Activated naive CD4-positive, alpha-beta T cell treated with anti-CD3 and anti-CD28 coated beads for 36 hours (primary cell): ENCODE measurements at regions of chr20 and their contacts with region 1.

Region 1: DNA sequence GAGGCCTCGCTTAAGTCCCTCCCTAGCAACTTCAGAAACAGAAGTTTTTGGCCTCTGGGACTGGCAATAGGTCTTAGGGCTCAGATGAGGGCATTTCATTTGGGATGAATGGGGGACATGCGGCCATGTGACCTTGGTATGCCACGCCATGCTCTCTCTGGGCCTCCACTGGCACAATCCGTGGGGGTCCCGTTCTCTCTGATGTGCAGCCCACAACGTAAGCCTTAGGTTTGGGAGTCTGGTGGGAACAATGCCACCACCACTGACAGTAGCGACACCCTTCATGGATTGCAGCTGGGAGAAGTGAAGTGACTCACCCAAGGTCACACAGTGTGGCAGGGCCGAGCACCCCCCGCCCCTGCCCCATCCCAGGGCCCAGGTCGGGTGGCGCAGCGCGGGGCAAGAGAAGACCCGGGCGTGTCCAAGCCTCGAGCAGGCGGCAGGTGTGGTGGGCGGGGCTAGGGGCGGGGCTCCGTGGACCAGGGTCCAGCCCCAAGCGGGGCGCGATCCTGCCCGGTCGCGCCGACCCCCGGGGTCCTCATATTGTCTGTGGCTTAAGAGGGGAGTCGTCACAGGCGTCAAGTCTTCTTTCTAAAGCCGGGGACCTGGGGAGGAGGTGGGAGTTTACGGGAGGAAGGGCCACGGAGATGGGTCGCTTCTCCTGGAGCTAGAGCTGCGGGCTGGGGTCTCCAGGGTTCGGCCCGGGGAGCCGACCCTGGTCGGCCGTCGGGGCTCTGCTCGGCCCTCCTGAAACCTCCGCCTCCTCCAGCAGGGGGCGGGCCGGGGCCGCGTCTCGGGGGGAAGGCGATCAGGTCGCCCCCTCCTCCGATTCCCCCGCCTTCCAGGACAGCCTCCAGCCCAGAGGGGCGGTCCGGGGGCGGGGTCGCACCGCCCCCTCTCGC is 698 bp upstream of the CEBPB start:
- DNase-seq: peak; percentile 90
- H3K4me3 Mint-ChIP-seq: peak overlapping the region; percentile 29
- H3K27ac Mint-ChIP-seq: no peak overlapping the region
- H3K4me1 Mint-ChIP-seq: peaks cover 15% of the 10 kb centered on the region
- H3K27me3 Mint-ChIP-seq: peaks cover 9% of the 10 kb centered on the region

Region 2: DNA sequence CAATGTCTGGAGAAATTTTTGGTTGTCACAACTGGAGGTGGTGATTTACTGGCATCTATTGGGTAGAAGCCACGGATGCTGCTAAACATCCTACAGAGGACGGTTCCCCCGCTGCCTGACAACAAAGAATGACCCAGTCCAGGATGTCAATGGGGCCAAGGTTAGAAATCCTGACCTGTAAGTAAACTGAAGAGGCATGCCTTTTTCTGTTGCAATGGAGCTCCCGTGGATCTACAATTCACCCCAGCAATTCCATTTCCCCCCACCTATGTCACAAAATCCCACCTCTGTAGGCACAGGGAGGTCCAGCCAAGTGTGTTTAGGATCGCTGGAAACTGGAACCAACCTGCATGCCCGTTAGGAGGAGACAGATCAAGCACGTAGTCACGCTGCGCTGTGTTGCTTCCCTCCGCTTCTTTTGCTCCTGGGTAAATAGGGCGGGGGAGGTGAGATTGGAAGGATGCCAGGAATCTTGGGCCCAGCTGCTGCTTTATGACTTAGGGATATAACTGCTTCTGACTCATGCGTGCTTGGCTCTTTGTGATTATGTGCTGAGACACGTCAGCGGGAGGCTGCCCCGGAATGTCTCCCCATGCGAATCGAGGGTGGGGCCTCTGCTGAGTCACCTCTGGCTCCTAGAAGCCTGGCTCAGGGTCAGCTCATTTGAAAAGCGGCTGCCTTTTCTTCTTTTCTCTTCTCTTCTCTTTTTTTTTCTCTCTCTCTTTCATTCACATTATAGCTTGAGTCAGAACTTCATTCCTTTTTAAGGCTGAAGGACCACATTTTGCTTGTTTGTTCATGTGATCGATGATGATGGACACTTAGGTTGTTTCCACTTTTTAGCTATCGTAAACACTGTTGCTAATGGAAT is 24.0 kb before region 1 on chr20:
- CTCF ChIA-PET with region 1: no interaction called
- intact Hi-C with region 1: loop called (anchors 1 kb)
- DNase-seq: peak; percentile 97
- H3K4me3 Mint-ChIP-seq: peak overlapping the region; percentile 65
- H3K27ac Mint-ChIP-seq: peak overlapping the region; percentile 63
- H3K4me1 Mint-ChIP-seq: peaks cover 11% of the 10 kb centered on the region
- H3K27me3 Mint-ChIP-seq: peaks cover 2% of the 10 kb centered on the region

Region 3: DNA sequence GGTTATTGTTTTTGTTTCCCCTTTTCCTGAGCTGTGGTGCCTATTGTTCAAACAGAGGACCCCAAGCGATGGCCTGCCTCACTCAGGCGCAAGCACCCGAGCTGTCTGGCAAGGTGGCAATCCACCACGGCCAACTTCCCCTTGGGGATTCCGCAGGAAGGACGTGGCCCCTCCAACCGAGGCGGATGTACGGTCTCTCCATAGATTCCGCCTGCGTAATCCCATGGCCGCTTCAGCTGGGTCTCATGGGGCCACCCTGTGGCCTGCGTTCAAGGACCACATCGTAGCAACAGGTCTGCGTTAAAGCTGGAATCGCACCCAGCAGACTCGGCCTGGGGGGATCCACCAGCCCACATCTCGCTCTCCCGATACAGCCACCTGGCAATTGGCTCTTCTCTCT is 80.6 kb after region 1 on chr20:
- CTCF ChIA-PET with region 1: no interaction called
- intact Hi-C with region 1: loop called (anchors 1 kb)
- DNase-seq: peak; percentile 32
- H3K4me3 Mint-ChIP-seq: no peak overlapping the region
- H3K27ac Mint-ChIP-seq: no peak overlapping the region
- H3K4me1 Mint-ChIP-seq: peaks cover 5% of the 10 kb centered on the region
- H3K27me3 Mint-ChIP-seq: peaks cover 16% of the 10 kb centered on the region

Region 4: GRCh38 chr20:50381888-50382593 is 192.1 kb after region 1 on chr20:
- CTCF ChIA-PET with region 1: no interaction called
- intact Hi-C with region 1: loop called (anchors 2 kb)
- DNase-seq: peak; percentile 55
- H3K4me3 Mint-ChIP-seq: peak overlapping the region; percentile 34
- H3K27ac Mint-ChIP-seq: peak overlapping the region; percentile 75
- H3K4me1 Mint-ChIP-seq: peaks cover 46% of the 10 kb centered on the region
- H3K27me3 Mint-ChIP-seq: no peaks in the 10 kb centered on the region

Region 5: DNA sequence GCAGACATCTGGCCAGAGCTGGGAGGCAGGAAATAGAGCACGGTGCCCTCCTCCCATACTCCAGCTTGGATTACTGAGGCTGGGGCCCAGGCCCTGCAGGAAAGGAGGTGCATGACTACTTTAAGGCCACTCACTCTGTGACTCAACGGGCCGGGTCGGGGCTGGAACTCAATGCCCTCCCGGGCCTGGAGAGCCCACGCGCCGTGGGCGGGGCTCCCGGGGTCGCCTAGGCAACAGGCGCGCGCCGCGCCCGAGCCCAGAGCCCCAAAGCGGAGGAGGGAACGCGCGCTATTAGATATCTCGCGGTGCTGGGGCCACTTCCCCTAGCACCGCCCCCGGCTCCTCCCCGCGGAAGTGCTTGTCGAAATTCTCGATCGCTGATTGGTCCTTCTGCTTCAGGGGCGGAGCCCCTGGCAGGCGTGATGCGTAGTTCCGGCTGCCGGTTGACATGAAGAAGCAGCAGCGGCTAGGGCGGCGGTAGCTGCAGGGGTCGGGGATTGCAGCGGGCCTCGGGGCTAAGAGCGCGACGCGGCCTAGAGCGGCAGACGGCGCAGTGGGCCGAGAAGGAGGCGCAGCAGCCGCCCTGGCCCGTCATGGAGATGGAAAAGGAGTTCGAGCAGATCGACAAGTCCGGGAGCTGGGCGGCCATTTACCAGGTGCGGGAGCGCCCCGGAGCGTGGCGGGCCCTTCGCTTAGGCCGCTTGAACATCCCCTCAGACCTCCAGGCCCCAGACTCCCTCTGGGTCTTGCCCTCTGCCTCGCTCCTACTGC is 320.2 kb after region 1 on chr20 and contains the start of gene PTPN1:
- CTCF ChIA-PET with region 1: interaction called, 3 read pairs
- intact Hi-C with region 1: loop called (anchors 2 kb)
- DNase-seq: peak; percentile 99
- H3K4me3 Mint-ChIP-seq: peak within 1 kb of the TSS; percentile 100
- H3K27ac Mint-ChIP-seq: peak within 1 kb of the TSS; percentile 93
- H3K4me1 Mint-ChIP-seq: peaks cover 37% of the 10 kb centered on the region
- H3K27me3 Mint-ChIP-seq: no peaks in the 10 kb centered on the region
- total RNA-seq, gene PTPN1: 111 to 119 TPM

Region 6: DNA sequence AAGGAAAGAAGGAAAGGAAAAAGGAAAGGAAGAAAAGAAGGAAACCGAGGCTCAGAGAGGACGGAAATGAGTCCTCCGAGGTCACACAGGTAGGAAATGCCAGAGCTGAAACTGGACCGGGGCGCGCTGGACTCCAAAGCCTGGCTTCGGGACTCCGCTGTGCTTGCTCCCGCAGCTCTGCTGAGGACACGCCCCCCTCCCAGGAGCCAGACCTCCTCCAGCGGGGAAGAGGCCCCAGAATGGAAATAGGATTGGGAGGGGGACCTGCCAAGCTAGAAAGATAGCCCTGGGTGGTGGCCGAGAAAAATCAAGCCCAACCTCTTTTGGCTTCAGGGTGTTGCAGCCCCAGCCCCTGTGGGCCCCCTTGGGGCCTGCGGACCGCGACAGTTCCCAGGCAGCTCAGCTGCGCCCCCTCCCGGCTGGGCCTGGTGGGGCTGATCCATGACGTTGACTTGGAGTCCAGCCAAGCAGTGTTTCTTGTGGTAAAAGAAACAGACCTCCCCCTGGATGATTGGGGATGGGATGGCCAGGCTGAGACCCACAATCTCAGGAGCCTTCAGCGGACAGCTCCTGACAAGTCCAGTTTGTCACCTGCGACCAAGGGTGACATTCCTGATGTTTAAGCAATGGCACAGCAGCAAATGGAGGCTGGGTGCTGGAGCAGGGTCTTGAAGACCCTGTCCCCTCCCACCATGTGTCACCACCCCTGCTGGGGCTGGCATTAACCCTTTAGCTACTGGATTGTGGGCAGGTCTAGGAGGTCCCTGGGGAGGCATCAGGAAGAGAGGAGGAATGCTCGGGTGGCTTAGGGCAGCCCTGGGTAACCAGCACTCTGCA is 446.0 kb after region 1 on chr20:
- CTCF ChIA-PET with region 1: interaction called, 3 read pairs
- intact Hi-C with region 1: loop called (anchors 1 kb)
- DNase-seq: peak; percentile 72
- H3K4me3 Mint-ChIP-seq: no peak overlapping the region
- H3K27ac Mint-ChIP-seq: no peak overlapping the region
- H3K4me1 Mint-ChIP-seq: no peaks in the 10 kb centered on the region
- H3K27me3 Mint-ChIP-seq: no peaks in the 10 kb centered on the region

Region 7: DNA sequence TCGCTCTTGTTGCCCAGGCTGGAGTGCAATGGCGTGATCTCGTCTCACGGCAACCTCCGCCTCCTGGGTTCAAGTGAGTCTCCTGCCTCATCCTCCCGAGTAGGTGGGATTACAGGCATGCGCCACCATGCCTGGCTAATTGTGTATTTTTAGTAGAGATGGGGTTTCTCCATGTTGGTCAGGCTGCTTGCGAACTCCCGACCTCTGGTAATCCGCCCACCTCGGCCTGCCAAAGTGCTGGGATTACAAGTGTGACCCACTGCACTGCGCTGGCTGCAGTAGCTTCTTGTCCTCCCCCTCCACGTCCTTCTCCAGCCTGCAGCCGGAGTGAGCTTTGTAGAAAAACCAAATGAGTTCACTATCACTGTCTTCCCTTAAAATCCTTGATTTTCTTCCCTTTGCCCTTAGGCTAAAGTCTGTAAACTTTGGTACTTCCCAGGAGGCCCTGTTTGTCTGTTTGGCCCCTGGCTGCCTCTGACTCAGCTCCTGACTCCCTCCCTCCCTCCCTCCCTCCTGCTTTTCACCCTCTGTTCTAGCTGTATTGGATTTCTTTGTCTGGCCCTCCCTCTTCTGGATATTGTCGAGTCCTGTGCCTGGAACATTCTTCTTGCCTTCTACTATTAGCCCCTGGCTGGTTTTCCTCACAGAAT is 554.3 kb after region 1 on chr20:
- CTCF ChIA-PET with region 1: no interaction called
- intact Hi-C with region 1: loop called (anchors 5 kb)
- DNase-seq: peak; percentile 44
- H3K4me3 Mint-ChIP-seq: no peak overlapping the region
- H3K27ac Mint-ChIP-seq: no peak overlapping the region
- H3K4me1 Mint-ChIP-seq: peaks cover 48% of the 10 kb centered on the region
- H3K27me3 Mint-ChIP-seq: no peaks in the 10 kb centered on the region